A673 (cell line): ENCODE measurements at regions of chr11 and their contacts with region 1.

Region 1: GRCh38 chr11:100930185-100930778 is 199.3 kb downstream of the PGR start:
- DNase-seq: peak; percentile 82
- H3K4me3 ChIP-seq: no peak overlapping the region
- H3K27ac ChIP-seq: no peak overlapping the region
- H3K4me1 ChIP-seq: peaks cover 4% of the 10 kb centered on the region
- H3K27me3 ChIP-seq: no peaks in the 10 kb centered on the region
- CTCF ChIP-seq: peak; percentile 77

Region 2: DNA sequence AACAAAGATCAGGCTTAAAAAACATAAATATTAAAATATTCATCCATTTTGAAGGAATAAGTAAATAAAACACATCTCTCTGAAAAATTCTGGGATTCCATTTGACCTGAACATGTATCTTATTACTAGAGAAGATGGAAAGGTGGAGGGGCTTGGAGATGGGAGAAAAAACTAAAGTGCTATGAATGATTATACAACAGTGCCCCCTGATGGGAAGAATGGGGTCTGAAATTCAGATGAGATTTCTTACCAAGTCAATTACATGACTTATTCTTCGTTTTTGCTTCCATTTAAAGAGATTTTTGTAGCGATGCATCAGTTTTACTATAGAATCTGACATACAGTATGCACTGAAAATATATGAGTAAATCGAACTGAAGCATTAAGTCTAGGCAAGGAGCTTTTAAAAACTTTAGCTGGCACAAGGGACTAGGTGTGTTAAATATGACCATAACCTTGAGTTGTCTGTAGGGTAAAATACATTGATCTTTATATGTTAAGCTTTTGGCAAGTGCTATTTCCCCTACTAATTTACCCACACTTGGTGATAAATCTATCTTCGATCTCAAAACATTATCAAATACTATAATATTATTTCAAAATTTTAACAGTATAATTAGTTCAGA is 1190.7 kb before region 1 on chr11:
- CTCF ChIA-PET with region 1: no interaction called
- POLR2A ChIA-PET with region 1: no interaction called
- intact Hi-C with region 1: loop called (anchors 10 kb)
- DNase-seq: peak; percentile 80
- H3K4me3 ChIP-seq: no peak overlapping the region
- H3K27ac ChIP-seq: no peak overlapping the region
- H3K4me1 ChIP-seq: peaks cover 4% of the 10 kb centered on the region
- H3K27me3 ChIP-seq: no peaks in the 10 kb centered on the region
- CTCF ChIP-seq: peak; percentile 84

Region 3: DNA sequence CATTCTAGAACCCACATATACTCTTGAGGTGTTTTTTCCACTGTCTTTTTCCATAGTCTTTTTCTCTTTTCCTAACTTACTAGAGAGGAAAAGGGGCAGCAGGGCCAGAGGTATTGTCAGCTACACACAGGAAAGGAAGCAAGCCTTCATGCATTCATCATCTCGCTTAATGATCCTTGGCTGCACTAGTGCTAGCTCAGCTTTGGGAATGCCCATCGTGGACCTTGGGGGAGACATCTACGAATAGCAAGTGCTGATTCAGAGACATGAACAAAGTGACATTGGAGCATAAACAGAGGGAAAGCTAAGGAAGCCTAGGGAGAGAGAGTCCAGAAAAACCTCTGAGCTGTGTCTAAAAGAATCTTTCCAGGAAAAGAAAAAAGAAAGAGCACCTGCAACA is 709.5 kb before region 1 on chr11:
- CTCF ChIA-PET with region 1: no interaction called
- POLR2A ChIA-PET with region 1: no interaction called
- intact Hi-C with region 1: loop called (anchors 10 kb)
- DNase-seq: peak; percentile 31
- H3K4me3 ChIP-seq: peak overlapping the region; percentile 30
- H3K27ac ChIP-seq: peak overlapping the region; percentile 73
- H3K4me1 ChIP-seq: peaks cover 31% of the 10 kb centered on the region
- H3K27me3 ChIP-seq: no peaks in the 10 kb centered on the region
- CTCF ChIP-seq: no peak

Region 4: GRCh38 chr11:100632941-100633452 is 297.3 kb before region 1 on chr11:
- CTCF ChIA-PET with region 1: no interaction called
- POLR2A ChIA-PET with region 1: no interaction called
- intact Hi-C with region 1: no loop called
- DNase-seq: peak; percentile 46
- H3K4me3 ChIP-seq: no peak overlapping the region
- H3K27ac ChIP-seq: no peak overlapping the region
- H3K4me1 ChIP-seq: peaks cover 7% of the 10 kb centered on the region
- H3K27me3 ChIP-seq: no peaks in the 10 kb centered on the region
- CTCF ChIP-seq: no peak

Region 5: DNA sequence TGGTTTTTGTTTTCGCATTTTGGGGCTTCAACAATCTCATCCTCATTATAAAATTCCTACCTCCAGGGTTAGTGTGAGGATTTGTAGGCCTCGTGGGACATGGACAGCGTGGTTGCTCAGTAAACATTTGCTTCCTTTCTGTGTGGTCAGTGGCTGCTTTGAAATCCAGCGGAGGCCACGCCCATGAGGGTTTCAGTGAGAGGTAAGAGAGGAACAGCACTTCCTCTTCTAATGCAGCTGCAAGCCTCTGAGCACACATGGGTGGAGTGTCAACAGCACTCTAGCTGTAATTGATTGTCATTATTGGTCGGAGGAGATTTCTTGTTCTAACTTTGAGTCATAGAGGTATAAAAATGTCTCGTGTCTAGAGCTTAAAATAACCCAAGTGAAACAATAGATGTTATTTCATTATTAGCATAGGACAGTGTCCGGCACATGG is 249.2 kb before region 1 on chr11:
- CTCF ChIA-PET with region 1: no interaction called
- POLR2A ChIA-PET with region 1: no interaction called
- intact Hi-C with region 1: loop called (anchors 1 kb)
- DNase-seq: no peak
- H3K4me3 ChIP-seq: no peak overlapping the region
- H3K27ac ChIP-seq: no peak overlapping the region
- H3K4me1 ChIP-seq: no peaks in the 10 kb centered on the region
- H3K27me3 ChIP-seq: no peaks in the 10 kb centered on the region
- CTCF ChIP-seq: no peak

Region 6: GRCh38 chr11:100855466-100856067 is 74.7 kb before region 1 on chr11:
- CTCF ChIA-PET with region 1: no interaction called
- POLR2A ChIA-PET with region 1: no interaction called
- intact Hi-C with region 1: loop called (anchors 5 kb)
- DNase-seq: peak; percentile 85
- H3K4me3 ChIP-seq: no peak overlapping the region
- H3K27ac ChIP-seq: no peak overlapping the region
- H3K4me1 ChIP-seq: peaks cover 10% of the 10 kb centered on the region
- H3K27me3 ChIP-seq: no peaks in the 10 kb centered on the region
- CTCF ChIP-seq: peak; percentile 69